Activated CD4-positive, alpha-beta T cell treated with anti-CD3 and anti-CD28 coated beads, Interleukin-2, amount 10 ng/mL, durations not matched to agents 7 days and 5 days (primary cell): ENCODE measurements at regions of chr1 and their contacts with region 1.

Region 1: DNA sequence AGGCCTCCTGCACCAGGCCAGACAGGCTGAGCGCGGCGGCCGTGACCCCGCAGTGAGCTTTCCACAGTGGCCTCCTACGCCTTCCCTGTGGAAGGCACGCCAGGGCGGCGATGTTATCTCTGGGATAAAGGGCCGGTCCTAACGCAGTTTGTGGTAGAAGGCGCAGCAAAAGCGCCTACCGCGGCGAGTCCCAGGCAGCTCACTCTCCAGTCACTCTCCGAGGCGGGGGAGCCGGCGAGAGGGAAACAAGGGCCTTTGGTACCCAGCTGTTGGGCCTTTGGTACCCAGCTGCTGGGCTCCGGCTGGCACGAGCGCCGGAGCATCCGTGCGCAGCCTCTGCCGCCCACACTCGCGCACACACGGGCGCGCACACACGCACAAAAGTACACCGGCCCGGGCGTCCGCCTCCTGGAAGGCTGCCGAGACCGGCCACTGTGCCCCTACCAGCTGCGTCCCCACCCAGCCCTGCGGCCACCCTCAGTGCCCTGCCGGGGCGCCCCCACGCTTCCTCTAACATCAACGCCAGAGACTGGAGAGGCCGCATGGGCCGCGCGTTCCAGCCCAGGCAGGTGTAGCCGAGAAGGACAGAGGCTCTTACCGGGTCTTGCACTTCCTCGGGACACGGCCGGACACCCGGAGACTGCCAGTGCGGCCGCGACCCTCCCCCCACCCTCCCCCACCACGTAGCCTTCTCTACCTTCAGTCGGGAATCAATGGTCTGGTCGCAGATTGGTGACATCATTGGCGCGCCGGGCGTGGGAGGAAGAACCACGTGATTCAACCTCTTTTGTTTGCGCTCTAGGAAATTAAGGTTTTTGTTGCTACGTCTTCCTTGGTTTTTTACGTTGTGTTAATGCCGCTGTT is 19.5 kb upstream of the ADAR start:
- DNase-seq: peak; percentile 94
- H3K4me3 Mint-ChIP-seq: peak overlapping the region; percentile 100
- H3K27ac Mint-ChIP-seq: peak overlapping the region; percentile 100
- H3K4me1 Mint-ChIP-seq: peaks cover 44% of the 10 kb centered on the region
- H3K27me3 Mint-ChIP-seq: peaks cover 15% of the 10 kb centered on the region

Region 2: GRCh38 chr1:154730259-154730658 is 102.8 kb after region 1 on chr1:
- CTCF ChIA-PET with region 1: no interaction called
- POLR2A ChIA-PET with region 1: no interaction called
- DNase-seq: no peak
- H3K4me3 Mint-ChIP-seq: no peak overlapping the region
- H3K27ac Mint-ChIP-seq: no peak overlapping the region
- H3K4me1 Mint-ChIP-seq: peaks cover 60% of the 10 kb centered on the region
- H3K27me3 Mint-ChIP-seq: peaks cover 4% of the 10 kb centered on the region

Region 3: GRCh38 chr1:154923695-154924094 is 296.2 kb after region 1 on chr1:
- CTCF ChIA-PET with region 1: interaction called, 10 read pairs
- POLR2A ChIA-PET with region 1: no interaction called
- DNase-seq: no peak
- H3K4me3 Mint-ChIP-seq: no peak overlapping the region
- H3K27ac Mint-ChIP-seq: no peak overlapping the region
- H3K4me1 Mint-ChIP-seq: peaks cover 21% of the 10 kb centered on the region
- H3K27me3 Mint-ChIP-seq: no peaks in the 10 kb centered on the region